AG04450 (cell line): ENCODE measurements at regions of chr10 and their contacts with region 1.

Region 1: GRCh38 chr10:30591249-30591670 is 38.3 kb downstream of the LYZL2 start:
- DNase-seq: peak; percentile 10
- H3K4me3 ChIP-seq: no peak overlapping the region
- H3K27ac ChIP-seq: no peak overlapping the region
- H3K27me3 ChIP-seq: peaks cover 16% of the 10 kb centered on the region
- CTCF ChIP-seq: peak; percentile 81

Region 2: GRCh38 chr10:30247704-30248103 is 343.6 kb before region 1 on chr10:
- CTCF ChIA-PET with region 1: no interaction called
- POLR2A ChIA-PET with region 1: no interaction called
- DNase-seq: no peak
- H3K4me3 ChIP-seq: no peak overlapping the region
- H3K27ac ChIP-seq: no peak overlapping the region
- H3K27me3 ChIP-seq: peaks cover 2% of the 10 kb centered on the region
- CTCF ChIP-seq: no peak

Region 3: DNA sequence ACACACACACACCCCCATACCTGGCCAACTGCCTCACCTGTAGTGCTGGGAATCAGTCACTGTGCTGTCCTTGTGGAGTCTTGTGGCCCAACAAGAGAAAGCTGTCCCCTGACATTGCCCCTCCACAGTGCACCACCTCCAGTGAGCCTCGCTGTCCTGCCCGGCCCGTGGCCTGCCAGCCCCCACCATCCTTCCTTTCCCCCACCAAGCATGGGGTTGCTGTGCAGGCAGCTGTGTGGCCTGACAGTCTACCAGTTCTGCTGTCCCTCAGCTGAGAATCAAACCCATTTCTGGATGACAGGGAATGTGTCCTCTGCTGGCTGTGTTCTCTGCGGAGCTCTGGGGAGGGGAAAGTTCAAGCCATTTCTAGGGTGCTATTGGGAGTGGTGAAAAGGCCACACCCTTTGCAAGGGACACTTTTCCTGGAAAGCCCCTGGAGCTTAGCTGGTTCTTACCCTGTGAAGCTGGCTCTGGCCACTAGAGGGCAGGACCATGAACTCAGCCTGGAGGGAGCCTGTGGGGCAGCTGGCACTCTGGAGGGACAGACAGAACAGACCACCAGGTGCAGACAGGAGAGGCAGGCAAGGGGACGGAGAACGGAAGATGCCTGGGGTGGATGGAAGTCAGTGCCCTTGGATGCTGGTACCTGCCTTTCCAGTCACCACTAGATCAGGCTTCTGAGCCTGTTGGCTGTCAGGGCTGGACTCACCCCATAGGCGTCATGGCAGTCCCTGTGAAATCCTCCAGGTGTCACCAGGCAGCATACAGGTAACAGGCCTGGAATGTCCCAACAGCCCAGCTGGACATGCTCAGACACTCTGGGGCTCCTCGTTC is 231.7 kb before region 1 on chr10:
- CTCF ChIA-PET with region 1: interaction called, 24 read pairs
- POLR2A ChIA-PET with region 1: no interaction called
- DNase-seq: no peak
- H3K4me3 ChIP-seq: no peak overlapping the region
- H3K27ac ChIP-seq: no peak overlapping the region
- H3K27me3 ChIP-seq: peaks cover 28% of the 10 kb centered on the region
- CTCF ChIP-seq: peak; percentile 89

Region 4: GRCh38 chr10:30392564-30392990 is 198.7 kb before region 1 on chr10:
- CTCF ChIA-PET with region 1: interaction called, 131 read pairs
- POLR2A ChIA-PET with region 1: interaction called, 3 read pairs
- DNase-seq: peak; percentile 15
- H3K4me3 ChIP-seq: 0 out of 2 replicates have a peak overlapping the region, but pooled peaks have one; percentile 7
- H3K27ac ChIP-seq: no peak overlapping the region
- H3K27me3 ChIP-seq: peaks cover 24% of the 10 kb centered on the region
- CTCF ChIP-seq: peak; percentile 94

Region 5: DNA sequence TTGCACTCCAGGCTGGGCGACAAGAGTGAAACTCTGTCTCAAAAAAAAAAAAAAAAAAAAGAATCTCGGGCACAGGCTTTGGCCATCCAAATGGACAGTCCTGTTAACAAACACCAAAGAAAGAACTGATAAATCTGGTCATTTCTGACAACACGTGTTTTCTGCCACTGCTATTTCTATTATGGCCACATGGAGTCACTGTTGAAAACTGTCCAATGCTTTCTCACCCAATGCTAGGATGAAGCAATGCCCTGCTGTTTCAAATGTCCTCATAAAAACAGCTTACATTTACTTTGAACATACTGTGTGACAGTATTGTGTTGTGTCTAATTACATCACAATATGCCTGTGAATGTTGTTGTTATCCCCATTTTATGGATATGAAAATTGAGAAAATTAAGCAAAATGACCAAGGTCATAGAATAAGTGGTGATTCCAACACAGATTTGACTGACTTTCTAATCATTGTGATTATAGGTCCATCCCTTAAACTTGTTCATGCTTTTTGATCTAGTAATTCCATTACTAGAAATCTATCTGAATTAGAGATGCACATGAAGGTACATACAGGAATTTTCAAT is 177.2 kb before region 1 on chr10:
- CTCF ChIA-PET with region 1: interaction called, 42 read pairs
- POLR2A ChIA-PET with region 1: no interaction called
- DNase-seq: no peak
- H3K4me3 ChIP-seq: no peak overlapping the region
- H3K27ac ChIP-seq: no peak overlapping the region
- H3K27me3 ChIP-seq: peaks cover 3% of the 10 kb centered on the region
- CTCF ChIP-seq: peak; percentile 86

Region 6: GRCh38 chr10:30437031-30437841 is 154.0 kb before region 1 on chr10:
- CTCF ChIA-PET with region 1: interaction called, 13 read pairs
- POLR2A ChIA-PET with region 1: no interaction called
- DNase-seq: no peak
- H3K4me3 ChIP-seq: peak overlapping the region; percentile 29
- H3K27ac ChIP-seq: peak overlapping the region; percentile 43
- H3K27me3 ChIP-seq: no peaks in the 10 kb centered on the region
- CTCF ChIP-seq: no peak

Region 7: DNA sequence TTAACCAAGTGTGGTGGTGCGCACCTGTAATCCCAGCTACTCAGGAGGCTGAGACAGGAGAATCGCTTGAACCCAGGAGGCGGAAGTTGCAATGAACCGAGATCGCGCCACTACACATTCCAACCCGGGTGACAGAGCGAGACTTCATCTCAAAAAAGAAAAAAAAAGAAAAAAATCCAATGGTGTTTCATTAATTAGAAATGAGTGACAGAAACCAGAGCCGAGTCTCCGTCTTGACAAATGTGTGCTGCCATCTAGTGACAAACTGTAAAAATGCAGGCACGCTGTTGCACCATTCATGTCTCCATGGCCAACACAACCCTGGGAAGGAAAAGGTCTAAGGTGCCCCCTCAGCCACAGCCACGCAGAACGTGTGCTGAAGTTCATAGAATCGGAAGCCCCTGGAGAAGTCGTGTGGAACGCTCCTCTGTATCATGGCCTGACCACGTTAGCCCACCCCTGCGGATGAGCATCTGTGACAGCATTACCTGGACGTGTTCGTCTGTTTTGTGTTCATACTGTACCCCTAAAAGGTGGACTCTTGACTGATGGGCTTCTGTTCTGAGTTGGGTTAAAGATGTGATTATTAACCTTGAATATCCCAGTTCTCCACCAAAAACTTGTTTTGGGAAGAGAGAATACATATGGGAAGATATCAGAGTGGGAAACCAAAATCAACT is 56.7 kb before region 1 on chr10:
- CTCF ChIA-PET with region 1: interaction called, 17 read pairs
- POLR2A ChIA-PET with region 1: no interaction called
- DNase-seq: peak; percentile 38
- H3K4me3 ChIP-seq: no peak overlapping the region
- H3K27ac ChIP-seq: no peak overlapping the region
- H3K27me3 ChIP-seq: peaks cover 5% of the 10 kb centered on the region
- CTCF ChIP-seq: peak; percentile 89

Region 8: GRCh38 chr10:30606313-30606712 is 15.1 kb after region 1 on chr10:
- CTCF ChIA-PET with region 1: interaction called, 51 read pairs
- POLR2A ChIA-PET with region 1: no interaction called
- DNase-seq: no peak
- H3K4me3 ChIP-seq: no peak overlapping the region
- H3K27ac ChIP-seq: no peak overlapping the region
- H3K27me3 ChIP-seq: peaks cover 2% of the 10 kb centered on the region
- CTCF ChIP-seq: no peak

Region 9: DNA sequence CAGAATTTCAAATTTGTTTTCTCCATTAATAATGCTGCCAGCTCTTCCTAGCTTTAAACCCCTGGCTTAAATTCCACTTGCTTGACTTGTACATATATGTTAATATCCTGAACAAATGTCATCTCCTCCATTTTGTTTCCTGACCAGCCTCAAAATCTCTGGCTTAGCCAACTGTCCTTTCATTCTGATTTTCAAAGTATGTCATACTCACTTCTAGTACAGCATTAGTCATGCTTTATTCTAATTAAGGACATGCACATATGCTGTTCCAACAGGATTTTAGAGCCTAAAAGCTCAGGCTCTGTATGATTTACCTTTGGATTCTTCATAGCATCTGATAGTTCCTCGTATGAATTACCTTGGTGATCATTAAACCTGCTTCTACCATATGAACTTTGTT is 282.2 kb after region 1 on chr10:
- CTCF ChIA-PET with region 1: no interaction called
- POLR2A ChIA-PET with region 1: no interaction called
- DNase-seq: no peak
- H3K4me3 ChIP-seq: no peak overlapping the region
- H3K27ac ChIP-seq: no peak overlapping the region
- H3K27me3 ChIP-seq: no peaks in the 10 kb centered on the region
- CTCF ChIP-seq: no peak